Esophagus squamous epithelium (tissue), 5 donors: ENCODE measurements at regions of chr2 and their contacts with region 1.

Region 1: GRCh38 chr2:229431327-229431954 is 160.4 kb upstream of the PID1 start:
- DNase-seq: no peak
- H3K4me3 ChIP-seq: no peak overlapping the region
- H3K27ac ChIP-seq: no peak overlapping the region
- H3K4me1 ChIP-seq: no peaks in the 10 kb centered on the region
- H3K27me3 ChIP-seq: no peaks in the 10 kb centered on the region
- CTCF ChIP-seq: peak; percentile 14 to 53 (median 42)
- POLR2A ChIP-seq: no peak

Region 2: DNA sequence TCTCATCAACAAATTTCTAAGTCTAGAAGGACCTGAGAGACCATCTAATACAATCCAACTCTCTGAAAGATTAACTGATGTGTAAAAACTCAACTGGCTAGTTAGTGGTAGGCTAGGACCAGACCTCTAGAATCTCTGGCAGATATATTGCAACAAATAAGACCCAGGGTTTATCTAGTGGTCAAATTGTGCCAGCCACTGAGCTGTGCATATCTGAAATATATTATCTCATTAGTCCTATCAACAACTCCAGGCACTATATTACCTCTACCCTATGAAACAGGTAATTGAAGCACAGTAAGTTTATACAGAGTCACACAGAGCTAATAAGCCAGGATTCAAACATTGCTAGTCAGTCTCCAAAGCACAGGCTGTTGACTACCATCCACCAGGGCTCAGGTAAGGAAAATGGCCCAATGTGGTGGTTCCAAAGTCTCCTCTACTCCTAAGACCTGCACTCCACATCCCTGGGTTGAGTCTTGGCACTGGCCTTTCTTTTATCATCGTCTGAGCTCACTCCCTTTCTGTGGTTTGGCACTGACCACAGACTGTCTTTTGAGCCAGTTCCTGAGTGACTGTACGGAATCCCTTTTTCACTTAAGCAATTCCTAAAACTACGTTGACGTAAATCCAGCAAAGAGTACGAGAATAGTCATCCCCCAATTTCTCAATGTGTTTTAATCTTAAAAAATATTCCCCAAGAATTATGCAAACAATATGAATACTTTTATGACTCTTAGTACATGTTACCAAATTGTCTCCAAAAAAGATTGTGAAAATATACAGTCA is 148.5 kb before region 1 on chr2:
- intact Hi-C with region 1: no loop called
- DNase-seq: no peak
- H3K4me3 ChIP-seq: no peak overlapping the region
- H3K27ac ChIP-seq: peak overlapping the region in 1 of 4 donors; percentile 35
- H3K4me1 ChIP-seq: no peaks in the 10 kb centered on the region
- H3K27me3 ChIP-seq: no peaks in the 10 kb centered on the region
- CTCF ChIP-seq: no peak
- POLR2A ChIP-seq: no peak

Region 3: GRCh38 chr2:229586746-229587705 is 155.6 kb after region 1 on chr2:
- intact Hi-C with region 1: loop called (anchors 5 kb)
- DNase-seq: no peak
- H3K4me3 ChIP-seq: peak overlapping the region in 2 of 4 donors; percentile 15 to 44
- H3K27ac ChIP-seq: peak overlapping the region in 1 of 4 donors; percentile 28
- H3K4me1 ChIP-seq: peaks cover 0 to 12% (median 3%) of the 10 kb centered on the region in 3 donors
- H3K27me3 ChIP-seq: peaks cover 0 to 55% (median 0%) of the 10 kb centered on the region in 4 donors
- CTCF ChIP-seq: peak; percentile 41 to 85 (median 72)
- POLR2A ChIP-seq: no peak